Naive thymus-derived CD4-positive, alpha-beta T cell (primary cell): ENCODE measurements at regions of chr10 and their contacts with region 1.

Region 1: GRCh38 chr10:22029445-22030236 is 26.1 kb upstream of the DNAJC1 start:
- DNase-seq: peak in 7 of 9 donors; percentile 30 to 69 (median 41)
- ATAC-seq: peak; percentile 91
- H3K4me3 ChIP-seq: no peak overlapping the region
- H3K4me3 Mint-ChIP-seq: peak overlapping the region in 7 of 10 donors; percentile 30 to 73 (median 63)
- H3K27ac ChIP-seq: no peak overlapping the region
- H3K27ac Mint-ChIP-seq: peak overlapping the region in 8 of 9 donors; percentile 1 to 84 (median 56)
- H3K4me1 ChIP-seq: peaks cover 0 to 6% of the 10 kb centered on the region in 2 donors
- H3K4me1 Mint-ChIP-seq: peaks cover 5 to 26% (median 20%) of the 10 kb centered on the region in 7 donors
- H3K27me3 ChIP-seq: no peaks in the 10 kb centered on the region
- H3K27me3 Mint-ChIP-seq: peaks cover 0 to 21% (median 10%) of the 10 kb centered on the region in 5 donors

Region 2: GRCh38 chr10:21934307-21934706 is 95.3 kb before region 1 on chr10:
- CTCF ChIA-PET with region 1: no interaction called
- POLR2A ChIA-PET with region 1: no interaction called
- intact Hi-C with region 1: no loop called
- DNase-seq: no peak
- ATAC-seq: no peak
- H3K4me3 ChIP-seq: no peak overlapping the region
- H3K4me3 Mint-ChIP-seq: no peak overlapping the region
- H3K27ac ChIP-seq: no peak overlapping the region
- H3K27ac Mint-ChIP-seq: no peak overlapping the region
- H3K4me1 ChIP-seq: no peaks in the 10 kb centered on the region
- H3K4me1 Mint-ChIP-seq: peaks cover 0 to 8% (median 0%) of the 10 kb centered on the region in 7 donors
- H3K27me3 ChIP-seq: no peaks in the 10 kb centered on the region
- H3K27me3 Mint-ChIP-seq: no peaks in the 10 kb centered on the region

Region 3: DNA sequence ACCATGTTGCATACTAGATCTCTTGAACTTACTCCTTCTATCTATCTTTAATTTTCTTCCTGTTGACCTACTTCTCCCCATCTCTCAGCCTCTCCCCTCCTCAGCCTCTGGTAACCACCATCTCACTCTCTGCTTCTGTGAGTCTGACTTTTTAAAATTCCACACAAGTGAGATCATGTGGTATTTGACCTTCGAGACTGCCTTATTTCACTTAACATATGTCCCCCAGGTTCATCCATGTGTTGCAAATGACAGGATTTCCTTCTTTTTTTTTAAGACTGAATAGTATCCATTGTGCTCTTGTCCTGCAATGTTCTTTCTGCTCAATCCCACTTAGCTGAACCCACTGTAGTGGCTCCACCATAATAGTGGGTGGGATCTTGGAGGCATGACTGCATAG is 25.3 kb after region 1 on chr10:
- CTCF ChIA-PET with region 1: no interaction called
- POLR2A ChIA-PET with region 1: interaction called, 3 read pairs
- intact Hi-C with region 1: loop called in 1 of 2 experiments (anchors 5 kb)
- DNase-seq: no peak
- ATAC-seq: no peak
- H3K4me3 ChIP-seq: no peak overlapping the region
- H3K4me3 Mint-ChIP-seq: no peak overlapping the region
- H3K27ac ChIP-seq: no peak overlapping the region
- H3K27ac Mint-ChIP-seq: peak overlapping the region in 1 of 9 donors; percentile 11
- H3K4me1 ChIP-seq: no peaks in the 10 kb centered on the region
- H3K4me1 Mint-ChIP-seq: peaks cover 0 to 5% (median 0%) of the 10 kb centered on the region in 7 donors
- H3K27me3 ChIP-seq: peaks cover 0 to 4% of the 10 kb centered on the region in 2 donors
- H3K27me3 Mint-ChIP-seq: peaks cover 0 to 10% (median 0%) of the 10 kb centered on the region in 5 donors

Region 4: GRCh38 chr10:22427890-22428571 is 398.4 kb after region 1 on chr10:
- CTCF ChIA-PET with region 1: no interaction called
- POLR2A ChIA-PET with region 1: no interaction called
- intact Hi-C with region 1: no loop called
- DNase-seq: no peak
- ATAC-seq: no peak
- H3K4me3 ChIP-seq: no peak overlapping the region
- H3K4me3 Mint-ChIP-seq: no peak overlapping the region
- H3K27ac ChIP-seq: no peak overlapping the region
- H3K27ac Mint-ChIP-seq: no peak overlapping the region
- H3K4me1 ChIP-seq: no peaks in the 10 kb centered on the region
- H3K4me1 Mint-ChIP-seq: peaks cover 0 to 9% (median 0%) of the 10 kb centered on the region in 7 donors
- H3K27me3 ChIP-seq: no peaks in the 10 kb centered on the region
- H3K27me3 Mint-ChIP-seq: peaks cover 4 to 57% (median 17%) of the 10 kb centered on the region in 5 donors